ENCODE measurements at regions of chr14 and their contacts with region 1.

Region 1: DNA sequence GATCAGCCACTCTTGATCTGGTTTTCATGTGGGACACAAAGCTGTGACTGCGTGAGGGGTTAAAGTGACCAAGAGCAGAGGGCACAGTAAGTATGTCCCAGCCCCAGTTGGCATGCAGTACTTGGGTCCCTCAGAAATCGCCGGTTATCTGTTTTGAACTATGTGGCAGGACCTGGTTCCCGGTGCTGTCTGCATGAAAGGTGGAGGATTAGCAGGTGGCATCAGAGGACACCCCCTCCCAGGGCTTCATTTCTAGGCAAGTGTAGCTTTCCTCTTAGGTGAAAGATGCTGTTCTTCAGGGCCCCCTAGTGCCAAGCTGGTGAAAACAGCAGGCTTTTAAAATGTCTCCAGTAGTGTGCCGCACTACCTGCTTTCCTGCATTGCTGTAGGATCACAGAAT is 57.1 kb downstream of the ATG14 start:
- DNase-seq: peak in 4 of 5 donors; percentile 34 to 47 (median 42)
- ATAC-seq: peak; percentile 50 to 83 (median 72)
- H3K4me3 ChIP-seq: no peak overlapping the region
- H3K27ac ChIP-seq: no peak overlapping the region
- H3K4me1 ChIP-seq: peaks cover 0 to 16% (median 0%) of the 10 kb centered on the region in 12 donors
- H3K27me3 ChIP-seq: no peaks in the 10 kb centered on the region
- CTCF ChIP-seq: peak; percentile 14 to 72 (median 62)
- POLR2A ChIP-seq: no peak

Region 2: GRCh38 chr14:55212634-55213033 is 141.9 kb before region 1 on chr14:
- intact Hi-C with region 1: loop called (anchors 2 to 10 kb)
- DNase-seq: no peak
- ATAC-seq: no peak
- H3K4me3 ChIP-seq: no peak overlapping the region
- H3K27ac ChIP-seq: no peak overlapping the region
- H3K4me1 ChIP-seq: no peaks in the 10 kb centered on the region
- H3K27me3 ChIP-seq: no peaks in the 10 kb centered on the region
- CTCF ChIP-seq: no peak
- POLR2A ChIP-seq: no peak

Region 3: GRCh38 chr14:55221186-55221585 is 133.3 kb before region 1 on chr14:
- intact Hi-C with region 1: loop called in 5 of 10 experiments (anchors 5 to 10 kb)
- DNase-seq: no peak
- ATAC-seq: no peak
- H3K4me3 ChIP-seq: no peak overlapping the region
- H3K27ac ChIP-seq: no peak overlapping the region
- H3K4me1 ChIP-seq: no peaks in the 10 kb centered on the region
- H3K27me3 ChIP-seq: no peaks in the 10 kb centered on the region
- CTCF ChIP-seq: no peak
- POLR2A ChIP-seq: no peak

Region 4: DNA sequence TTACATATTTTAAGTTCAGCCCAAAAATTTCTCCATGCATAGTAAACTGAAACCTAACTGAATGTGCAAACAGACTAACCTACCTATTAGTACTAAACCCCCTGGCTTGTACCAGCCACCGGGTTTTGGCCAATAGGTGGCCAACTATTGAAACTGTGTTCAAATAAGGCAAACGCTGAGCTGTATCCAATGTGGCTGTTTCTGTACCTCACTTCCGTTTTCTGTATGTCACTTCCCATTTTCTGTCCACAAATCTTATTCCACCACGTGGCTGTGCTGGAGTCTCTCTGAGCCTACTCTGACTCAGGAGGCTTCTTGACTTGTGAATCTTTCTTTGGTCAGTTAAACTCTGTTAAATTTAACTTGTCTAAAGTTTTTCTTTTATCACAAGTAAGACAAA is 89.3 kb before region 1 on chr14:
- intact Hi-C with region 1: loop called in 7 of 10 experiments (anchors 1 to 5 kb)
- DNase-seq: no peak
- ATAC-seq: no peak
- H3K4me3 ChIP-seq: no peak overlapping the region
- H3K27ac ChIP-seq: no peak overlapping the region
- H3K4me1 ChIP-seq: peaks cover 0 to 3% (median 0%) of the 10 kb centered on the region in 12 donors
- H3K27me3 ChIP-seq: no peaks in the 10 kb centered on the region
- CTCF ChIP-seq: no peak
- POLR2A ChIP-seq: no peak

Region 5: GRCh38 chr14:55270832-55271565 is 83.5 kb before region 1 on chr14 and contains the start of gene FBXO34:
- intact Hi-C with region 1: loop called (anchors 1 to 5 kb)
- DNase-seq: peak; percentile 98 to 100 (median 99)
- ATAC-seq: peak; percentile 90 to 94 (median 92)
- H3K4me3 ChIP-seq: peak within 1 kb of the TSS; percentile 70 to 99 (median 95)
- H3K27ac ChIP-seq: peak within 1 kb of the TSS; percentile 81 to 97 (median 93)
- H3K4me1 ChIP-seq: peaks cover 0 to 40% (median 27%) of the 10 kb centered on the region in 12 donors
- H3K27me3 ChIP-seq: no peaks in the 10 kb centered on the region
- CTCF ChIP-seq: peak; percentile 98 to 100 (median 99)
- POLR2A ChIP-seq: peak; percentile 34 to 96
- total RNA-seq, gene FBXO34: 17.1 to 33.4 (median 21.1) TPM